Activated CD4-positive, alpha-beta T cell treated with anti-CD3 and anti-CD28 coated beads for 36 hours (primary cell): ENCODE measurements at regions of chr6 and their contacts with region 1.

Region 1: DNA sequence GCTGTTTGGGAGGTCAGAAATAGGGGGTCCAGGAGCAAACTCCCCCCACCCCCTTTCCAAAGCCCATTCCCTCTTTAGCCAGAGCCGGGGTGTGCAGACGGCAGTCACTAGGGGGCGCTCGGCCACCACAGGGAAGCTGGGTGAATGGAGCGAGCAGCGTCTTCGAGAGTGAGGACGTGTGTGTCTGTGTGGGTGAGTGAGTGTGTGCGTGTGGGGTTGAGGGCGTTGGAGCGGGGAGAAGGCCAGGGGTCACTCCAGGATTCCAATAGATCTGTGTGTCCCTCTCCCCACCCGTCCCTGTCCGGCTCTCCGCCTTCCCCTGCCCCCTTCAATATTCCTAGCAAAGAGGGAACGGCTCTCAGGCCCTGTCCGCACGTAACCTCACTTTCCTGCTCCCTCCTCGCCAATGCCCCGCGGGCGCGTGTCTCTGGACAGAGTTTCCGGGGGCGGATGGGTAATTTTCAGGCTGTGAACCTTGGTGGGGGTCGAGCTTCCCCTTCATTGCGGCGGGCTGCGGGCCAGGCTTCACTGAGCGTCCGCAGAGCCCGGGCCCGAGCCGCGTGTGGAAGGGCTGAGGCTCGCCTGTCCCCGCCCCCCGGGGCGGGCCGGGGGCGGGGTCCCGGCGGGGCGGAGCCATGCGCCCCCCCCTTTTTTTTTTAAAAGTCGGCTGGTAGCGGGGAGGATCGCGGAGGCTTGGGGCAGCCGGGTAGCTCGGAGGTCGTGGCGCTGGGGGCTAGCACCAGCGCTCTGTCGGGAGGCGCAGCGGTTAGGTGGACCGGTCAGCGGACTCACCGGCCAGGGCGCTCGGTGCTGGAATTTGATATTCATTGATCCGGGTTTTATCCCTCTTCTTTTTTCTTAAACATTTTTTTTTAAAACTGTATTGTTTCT is at the start of gene VEGFA:
- DNase-seq: peak; percentile 95
- ATAC-seq: peak; percentile 74
- H3K4me3 Mint-ChIP-seq: peak within 1 kb of the TSS; percentile 96
- H3K27ac Mint-ChIP-seq: peak within 1 kb of the TSS; percentile 91
- H3K4me1 Mint-ChIP-seq: peaks cover 18% of the 10 kb centered on the region
- H3K27me3 Mint-ChIP-seq: peaks cover 4% of the 10 kb centered on the region
- total RNA-seq, gene VEGFA: 64.6 to 72.8 TPM

Region 2: DNA sequence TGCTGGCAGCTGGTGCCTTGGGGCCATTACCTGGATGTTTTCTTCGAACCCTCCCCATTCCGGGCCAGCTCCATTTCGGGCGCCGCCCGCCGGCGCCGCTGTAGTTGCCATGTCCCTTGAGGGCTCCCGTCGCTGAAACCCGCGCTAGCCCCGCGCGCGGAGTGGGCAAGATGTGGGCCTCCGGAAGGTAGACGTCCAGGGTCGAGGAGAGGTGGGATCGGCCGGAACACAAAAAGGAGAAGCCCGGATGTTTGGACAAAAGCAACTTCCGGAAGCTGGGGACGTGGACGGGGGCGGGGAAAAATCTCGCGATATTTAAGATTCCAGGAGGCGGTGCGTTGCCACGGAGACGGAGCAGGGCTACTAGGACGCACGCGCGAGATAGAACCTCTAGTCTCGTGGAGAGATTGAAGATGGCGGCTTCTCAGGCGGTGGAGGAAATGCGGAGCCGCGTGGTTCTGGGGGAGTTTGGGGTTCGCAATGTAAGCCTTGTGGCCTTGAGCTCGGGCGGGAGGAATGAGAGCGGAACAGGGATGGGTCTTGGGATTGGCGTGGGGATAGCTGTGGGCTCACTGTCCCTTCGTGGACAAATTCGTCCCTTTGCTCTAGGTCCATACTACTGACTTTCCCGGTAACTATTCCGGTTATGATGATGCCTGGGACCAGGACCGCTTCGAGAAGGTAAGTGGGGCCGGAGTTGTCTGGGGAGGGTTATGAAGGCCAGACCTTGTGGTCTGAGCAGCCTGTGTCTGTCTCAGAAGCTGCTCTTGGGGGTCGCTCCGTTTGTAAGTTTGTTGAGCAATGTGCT is 252.9 kb before region 1 on chr6 and contains the starts of genes POLR1C and YIPF3:
- CTCF ChIA-PET with region 1: no interaction called
- POLR2A ChIA-PET with region 1: no interaction called
- intact Hi-C with region 1: loop called in 1 of 2 experiments (anchors 5 kb)
- DNase-seq: peak; percentile 98
- ATAC-seq: peak; percentile 93
- H3K4me3 Mint-ChIP-seq: no peak within 1 kb of the TSS
- H3K27ac Mint-ChIP-seq: no peak within 1 kb of the TSS
- H3K4me1 Mint-ChIP-seq: peaks cover 32% of the 10 kb centered on the region
- H3K27me3 Mint-ChIP-seq: no peaks in the 10 kb centered on the region
- total RNA-seq, gene POLR1C: 43.4 to 52.9 TPM
- total RNA-seq, gene YIPF3: 38.0 to 39.6 TPM

Region 3: DNA sequence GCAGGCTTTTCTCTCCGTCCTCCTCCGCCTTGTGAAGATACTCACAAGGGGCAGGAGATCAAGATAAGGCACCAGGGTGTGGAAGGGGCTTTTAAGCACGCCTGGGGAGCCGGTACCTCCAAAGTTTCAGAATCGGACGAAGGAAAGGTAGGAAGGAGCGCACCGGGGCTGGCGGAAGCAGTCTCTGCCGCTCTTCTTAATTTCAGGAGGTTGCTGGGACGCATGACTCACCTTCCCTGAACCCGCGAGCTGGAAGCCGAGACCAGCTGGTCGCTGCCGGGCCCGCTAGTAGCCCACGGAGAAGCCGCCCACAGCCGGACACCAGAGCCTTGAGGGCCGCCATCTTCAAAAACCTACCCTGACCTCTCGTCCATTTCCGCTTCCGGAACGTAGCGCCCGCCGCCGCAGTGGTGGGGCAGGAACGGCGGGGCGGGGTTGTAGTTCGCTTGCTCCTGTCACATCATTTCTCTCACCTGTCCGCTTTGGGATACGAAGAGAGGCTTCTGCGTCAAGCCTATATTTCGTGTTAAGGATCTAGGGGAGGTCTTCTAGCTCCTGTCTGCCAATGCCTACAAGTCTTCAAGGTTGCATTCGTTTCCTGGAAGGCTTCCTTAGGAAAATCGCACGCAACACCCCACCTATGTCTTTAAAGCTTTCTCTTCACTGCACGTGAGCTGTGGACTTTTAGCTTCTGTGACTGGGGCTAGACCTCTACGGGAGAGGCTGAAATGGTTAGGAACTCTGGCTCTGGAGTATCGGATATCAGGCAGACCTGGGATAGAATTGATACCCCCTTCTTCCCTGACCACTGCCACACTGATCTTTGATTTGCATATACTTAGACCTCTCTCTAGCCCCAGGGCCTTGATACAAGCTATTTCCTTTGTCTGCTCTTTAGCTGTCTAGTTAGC is 82.1 kb before region 1 on chr6 and contains the start of gene MRPS18A:
- CTCF ChIA-PET with region 1: interaction called, 7 read pairs
- POLR2A ChIA-PET with region 1: no interaction called
- intact Hi-C with region 1: loop called in 1 of 2 experiments (anchors 5 kb)
- DNase-seq: peak; percentile 91
- ATAC-seq: peak; percentile 99
- H3K4me3 Mint-ChIP-seq: peak within 1 kb of the TSS; percentile 90
- H3K27ac Mint-ChIP-seq: peak within 1 kb of the TSS; percentile 89
- H3K4me1 Mint-ChIP-seq: peaks cover 40% of the 10 kb centered on the region
- H3K27me3 Mint-ChIP-seq: no peaks in the 10 kb centered on the region
- total RNA-seq, gene MRPS18A: 54.0 to 68.7 TPM

Region 4: GRCh38 chr6:43838276-43839036 is 68.7 kb after region 1 on chr6:
- CTCF ChIA-PET with region 1: interaction called, 3 read pairs
- POLR2A ChIA-PET with region 1: no interaction called
- intact Hi-C with region 1: loop called in 1 of 2 experiments (anchors 1 kb)
- DNase-seq: peak; percentile 38
- ATAC-seq: peak; percentile 61
- H3K4me3 Mint-ChIP-seq: no peak overlapping the region
- H3K27ac Mint-ChIP-seq: no peak overlapping the region
- H3K4me1 Mint-ChIP-seq: no peaks in the 10 kb centered on the region
- H3K27me3 Mint-ChIP-seq: peaks cover 3% of the 10 kb centered on the region

Region 5: GRCh38 chr6:44127186-44128019 is 357.6 kb after region 1 on chr6 and contains the starts of genes MRPL14 and TMEM63B:
- CTCF ChIA-PET with region 1: interaction called, 3 read pairs
- POLR2A ChIA-PET with region 1: no interaction called
- intact Hi-C with region 1: loop called in 1 of 2 experiments (anchors 1 kb)
- DNase-seq: peak; percentile 95
- ATAC-seq: peak; percentile 81
- H3K4me3 Mint-ChIP-seq: peak within 1 kb of the TSS; percentile 82
- H3K27ac Mint-ChIP-seq: peak within 1 kb of the TSS; percentile 96
- H3K4me1 Mint-ChIP-seq: peaks cover 46% of the 10 kb centered on the region
- H3K27me3 Mint-ChIP-seq: no peaks in the 10 kb centered on the region
- total RNA-seq, gene MRPL14: 29.5 to 43.3 TPM
- total RNA-seq, gene TMEM63B: 10.9 to 15.2 TPM

Region 6: GRCh38 chr6:44338228-44339122 is 568.7 kb after region 1 on chr6:
- CTCF ChIA-PET with region 1: no interaction called
- POLR2A ChIA-PET with region 1: no interaction called
- intact Hi-C with region 1: loop called in 1 of 2 experiments (anchors 2 kb)
- DNase-seq: peak; percentile 81
- ATAC-seq: peak; percentile 84
- H3K4me3 Mint-ChIP-seq: no peak overlapping the region
- H3K27ac Mint-ChIP-seq: no peak overlapping the region
- H3K4me1 Mint-ChIP-seq: peaks cover 5% of the 10 kb centered on the region
- H3K27me3 Mint-ChIP-seq: peaks cover 15% of the 10 kb centered on the region

Region 7: DNA sequence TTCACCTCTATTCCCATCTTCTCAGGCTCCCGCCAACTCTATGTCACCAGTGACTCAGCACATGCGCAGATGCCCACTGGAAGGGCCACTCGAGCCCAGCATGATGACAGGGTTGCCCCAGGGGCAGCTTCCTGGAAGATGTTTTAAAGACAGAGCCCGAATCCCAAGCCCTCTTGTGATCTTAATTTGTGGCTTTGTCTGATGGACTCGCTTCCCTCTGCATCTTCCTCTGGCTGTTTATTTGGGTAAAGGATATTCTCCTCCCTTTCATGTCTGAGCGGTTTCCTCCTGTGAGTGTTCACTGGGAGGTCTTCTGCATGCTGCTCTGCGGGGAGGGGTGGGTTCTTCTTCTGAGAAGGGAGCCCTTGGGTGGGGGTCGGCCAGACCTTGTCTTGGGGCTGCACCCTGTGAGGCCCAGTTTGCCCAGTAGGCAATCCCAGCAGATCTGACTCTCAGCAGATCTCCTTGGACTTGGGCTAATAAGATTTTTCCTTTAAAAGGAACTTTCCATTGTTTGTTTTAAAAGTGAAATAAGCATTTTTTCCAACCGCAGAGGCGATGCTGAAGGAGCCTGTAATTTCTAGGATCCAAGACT is 1018.7 kb after region 1 on chr6:
- CTCF ChIA-PET with region 1: no interaction called
- POLR2A ChIA-PET with region 1: no interaction called
- intact Hi-C with region 1: no loop called
- DNase-seq: no peak
- ATAC-seq: no peak
- H3K4me3 Mint-ChIP-seq: no peak overlapping the region
- H3K27ac Mint-ChIP-seq: no peak overlapping the region
- H3K4me1 Mint-ChIP-seq: peaks cover 13% of the 10 kb centered on the region
- H3K27me3 Mint-ChIP-seq: no peaks in the 10 kb centered on the region